ENCODE measurements at regions of chr17 and their contacts with region 1.

Region 1: DNA sequence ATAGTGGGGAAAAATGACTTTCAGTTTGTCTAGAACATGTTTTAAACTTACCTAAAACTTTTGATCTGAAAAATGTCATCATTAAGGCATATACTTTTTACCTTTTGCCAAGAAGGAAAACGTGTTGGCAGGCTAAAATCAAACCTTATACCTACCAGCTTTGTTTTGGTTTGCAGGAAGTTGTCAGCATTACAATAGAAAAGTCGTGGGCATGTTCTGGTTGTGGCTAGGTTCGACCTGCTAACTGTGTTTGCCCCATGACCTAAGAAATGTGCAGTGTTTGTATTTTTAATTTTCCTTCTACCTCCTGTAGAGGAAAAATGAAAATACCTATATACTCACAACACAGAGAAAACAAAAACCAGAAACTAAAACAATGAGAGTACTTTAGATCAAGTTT is 13.0 kb downstream of the SKAP1 start:
- DNase-seq: no peak
- H3K4me3 ChIP-seq: no peak overlapping the region
- H3K27ac ChIP-seq: no peak overlapping the region
- H3K27me3 ChIP-seq: peaks cover 41% of the 10 kb centered on the region
- CTCF ChIP-seq: no peak

Region 2: GRCh38 chr17:48261297-48261880 is 155.6 kb before region 1 on chr17:
- CTCF ChIA-PET with region 1: interaction called, 11 read pairs
- POLR2A ChIA-PET with region 1: no interaction called
- DNase-seq: no peak
- H3K4me3 ChIP-seq: no peak overlapping the region
- H3K27ac ChIP-seq: no peak overlapping the region
- H3K27me3 ChIP-seq: peaks cover 26% of the 10 kb centered on the region
- CTCF ChIP-seq: peak; percentile 53

Region 3: GRCh38 chr17:48577946-48578615 is 161.1 kb after region 1 on chr17 and contains the start of gene HOXB4:
- CTCF ChIA-PET with region 1: no interaction called
- POLR2A ChIA-PET with region 1: no interaction called
- DNase-seq: no peak
- H3K4me3 ChIP-seq: peak within 1 kb of the TSS; percentile 90
- H3K27ac ChIP-seq: peak within 1 kb of the TSS; percentile 98
- H3K27me3 ChIP-seq: no peaks in the 10 kb centered on the region
- CTCF ChIP-seq: no peak
- polyA plus RNA-seq, gene HOXB4: 5.8 and 6.1 TPM in 2 replicates

Measured in AG04450 (cell line).